ENCODE measurements at regions of chr5 and their contacts with region 1.

Region 1: GRCh38 chr5:124599028-124599973 is 147.1 kb downstream of the ZNF608 start:
- DNase-seq: peak; percentile 55 to 59
- H3K4me3 ChIP-seq: no peak overlapping the region
- H3K4me3 Mint-ChIP-seq: no peak overlapping the region
- H3K27ac Mint-ChIP-seq: no peak overlapping the region
- H3K4me1 ChIP-seq: peaks cover 29% of the 10 kb centered on the region
- H3K4me1 Mint-ChIP-seq: peaks cover 13% of the 10 kb centered on the region
- H3K27me3 ChIP-seq: no peaks in the 10 kb centered on the region
- H3K27me3 Mint-ChIP-seq: no peaks in the 10 kb centered on the region
- CTCF ChIP-seq: no peak

Region 2: GRCh38 chr5:124310453-124310852 is 288.8 kb before region 1 on chr5:
- CTCF ChIA-PET with region 1: no interaction called
- POLR2A ChIA-PET with region 1: no interaction called
- intact Hi-C with region 1: no loop called
- DNase-seq: no peak
- H3K4me3 ChIP-seq: no peak overlapping the region
- H3K4me3 Mint-ChIP-seq: no peak overlapping the region
- H3K27ac Mint-ChIP-seq: no peak overlapping the region
- H3K4me1 ChIP-seq: peaks cover 3% of the 10 kb centered on the region; the same call in 1 of the 2 replicates
- H3K4me1 Mint-ChIP-seq: no peaks in the 10 kb centered on the region
- H3K27me3 ChIP-seq: no peaks in the 10 kb centered on the region
- H3K27me3 Mint-ChIP-seq: no peaks in the 10 kb centered on the region
- CTCF ChIP-seq: no peak

Region 3: GRCh38 chr5:124554746-124555578 is 44.3 kb before region 1 on chr5:
- CTCF ChIA-PET with region 1: no interaction called
- POLR2A ChIA-PET with region 1: no interaction called
- intact Hi-C with region 1: no loop called
- DNase-seq: no peak
- H3K4me3 ChIP-seq: no peak overlapping the region
- H3K4me3 Mint-ChIP-seq: no peak overlapping the region
- H3K27ac Mint-ChIP-seq: peak overlapping the region; percentile 25
- H3K4me1 ChIP-seq: 0 out of 2 replicates have a peak, but pooled peaks cover 7% of the 10 kb centered on the region
- H3K4me1 Mint-ChIP-seq: peaks cover 11% of the 10 kb centered on the region
- H3K27me3 ChIP-seq: no peaks in the 10 kb centered on the region
- H3K27me3 Mint-ChIP-seq: no peaks in the 10 kb centered on the region
- CTCF ChIP-seq: no peak

Region 4: GRCh38 chr5:124649491-124650146 is 50.3 kb after region 1 on chr5:
- CTCF ChIA-PET with region 1: no interaction called
- POLR2A ChIA-PET with region 1: no interaction called
- intact Hi-C with region 1: loop called (anchors 1 kb)
- DNase-seq: no peak
- H3K4me3 ChIP-seq: no peak overlapping the region
- H3K4me3 Mint-ChIP-seq: no peak overlapping the region
- H3K27ac Mint-ChIP-seq: no peak overlapping the region
- H3K4me1 ChIP-seq: peaks cover 33% of the 10 kb centered on the region
- H3K4me1 Mint-ChIP-seq: peaks cover 9% of the 10 kb centered on the region
- H3K27me3 ChIP-seq: no peaks in the 10 kb centered on the region
- H3K27me3 Mint-ChIP-seq: no peaks in the 10 kb centered on the region
- CTCF ChIP-seq: no peak

Measured in Caco-2 (cell line).